ENCODE measurements at regions of chr5 and their contacts with region 1.

Region 1: GRCh38 chr5:142548739-142549275 is 137.1 kb downstream of the FGF1 start:
- DNase-seq: no peak
- H3K4me3 ChIP-seq: no peak overlapping the region
- H3K27ac ChIP-seq: peak overlapping the region in 2 of 4 donors; percentile 1 to 46
- H3K4me1 ChIP-seq: peaks cover 25 to 36% (median 29%) of the 10 kb centered on the region in 4 donors
- H3K27me3 ChIP-seq: no peaks in the 10 kb centered on the region
- CTCF ChIP-seq: peak; percentile 81 to 92 (median 84)
- EP300 ChIP-seq: no peak
- POLR2A ChIP-seq: no peak

Region 2: GRCh38 chr5:142151436-142152383 is 397.1 kb before region 1 on chr5:
- intact Hi-C with region 1: loop called (anchors 1 kb)
- DNase-seq: no peak
- H3K4me3 ChIP-seq: no peak overlapping the region
- H3K27ac ChIP-seq: no peak overlapping the region
- H3K4me1 ChIP-seq: peaks cover 0 to 7% (median 3%) of the 10 kb centered on the region in 4 donors
- H3K27me3 ChIP-seq: no peaks in the 10 kb centered on the region
- CTCF ChIP-seq: peak; percentile 86 to 92 (median 89)
- EP300 ChIP-seq: no peak
- POLR2A ChIP-seq: no peak

Region 3: GRCh38 chr5:142324871-142325724 is 223.7 kb before region 1 on chr5 and contains the start of gene SPRY4:
- intact Hi-C with region 1: loop called (anchors 2 kb)
- DNase-seq: peak; percentile 97
- H3K4me3 ChIP-seq: peak within 1 kb of the TSS; percentile 62 to 87 (median 70)
- H3K27ac ChIP-seq: peak within 1 kb of the TSS; percentile 85 to 96 (median 88)
- H3K4me1 ChIP-seq: peaks cover 17 to 61% (median 56%) of the 10 kb centered on the region in 4 donors
- H3K27me3 ChIP-seq: peaks cover 0 to 9% (median 3%) of the 10 kb centered on the region in 4 donors
- CTCF ChIP-seq: peak in 2 of 3 experiments; percentile 17 to 22
- EP300 ChIP-seq: no peak
- POLR2A ChIP-seq: peak; percentile 62
- total RNA-seq, gene SPRY4: 15.4 to 29.0 (median 24.5) TPM

Region 4: DNA sequence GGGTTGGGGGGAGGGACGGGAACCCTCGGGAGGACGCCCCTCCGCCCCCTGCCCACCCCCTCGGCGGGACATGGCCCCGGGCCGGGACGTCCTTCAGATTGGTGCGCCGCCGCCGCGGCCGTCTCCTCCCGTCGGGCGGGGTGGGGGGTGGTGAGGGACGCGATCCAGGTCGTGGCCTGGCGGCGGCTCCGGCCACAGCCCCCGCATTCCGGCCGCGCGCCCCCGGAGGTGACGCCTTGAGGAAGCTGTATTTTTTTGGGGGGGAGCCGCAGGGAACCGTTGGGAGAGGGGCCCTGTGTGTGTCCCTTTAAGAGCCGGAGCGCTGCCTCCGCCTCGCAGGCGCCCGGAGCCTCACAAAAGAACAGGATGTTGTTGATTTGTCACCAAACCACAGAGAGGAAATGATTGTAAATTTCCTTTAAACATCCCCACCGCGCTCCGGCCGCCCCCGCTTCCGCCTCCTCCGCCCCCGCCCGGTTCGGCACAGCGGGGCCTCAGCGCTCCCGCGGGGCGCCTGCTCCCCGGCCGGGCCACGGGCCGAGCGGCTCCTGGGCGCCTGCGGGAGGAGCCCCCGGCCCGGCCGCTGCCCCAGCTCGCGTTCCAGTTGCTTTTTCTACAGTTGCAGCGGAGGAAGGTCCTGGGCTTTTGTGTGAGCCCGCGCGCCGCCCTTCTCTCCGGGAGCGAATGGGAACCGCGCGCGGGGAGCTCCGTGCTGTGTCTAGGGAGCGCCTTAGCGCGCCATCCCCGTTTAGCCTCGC is 191.9 kb before region 1 on chr5:
- intact Hi-C with region 1: loop called (anchors 10 kb)
- DNase-seq: peak; percentile 98
- H3K4me3 ChIP-seq: peak overlapping the region; percentile 67 to 83 (median 78)
- H3K27ac ChIP-seq: peak overlapping the region; percentile 88 to 99 (median 96)
- H3K4me1 ChIP-seq: peaks cover 15 to 24% (median 19%) of the 10 kb centered on the region in 4 donors
- H3K27me3 ChIP-seq: no peaks in the 10 kb centered on the region
- CTCF ChIP-seq: no peak
- EP300 ChIP-seq: no peak
- POLR2A ChIP-seq: no peak

Region 5: GRCh38 chr5:142441616-142442015 is 107.2 kb before region 1 on chr5:
- intact Hi-C with region 1: loop called (anchors 2 kb)
- DNase-seq: no peak
- H3K4me3 ChIP-seq: peak overlapping the region in 1 of 4 donors; percentile 19
- H3K27ac ChIP-seq: peak overlapping the region in 1 of 4 donors; percentile 53
- H3K4me1 ChIP-seq: peaks cover 14 to 31% (median 21%) of the 10 kb centered on the region in 4 donors
- H3K27me3 ChIP-seq: no peaks in the 10 kb centered on the region
- CTCF ChIP-seq: peak; percentile 17 to 38 (median 31)
- EP300 ChIP-seq: no peak
- POLR2A ChIP-seq: no peak